ENCODE measurements at regions of chr4 and their contacts with region 1.

Region 1: GRCh38 chr4:81255524-81255923 is 40.5 kb upstream of the PRKG2 start:
- DNase-seq: peak; percentile 50
- H3K4me3 ChIP-seq: no peak overlapping the region
- H3K27me3 ChIP-seq: no peaks in the 10 kb centered on the region
- CTCF ChIP-seq: no peak

Region 2: GRCh38 chr4:81084029-81084428 is 171.5 kb before region 1 on chr4:
- CTCF ChIA-PET with region 1: interaction called, 11 read pairs
- POLR2A ChIA-PET with region 1: no interaction called
- DNase-seq: no peak
- H3K4me3 ChIP-seq: no peak overlapping the region
- H3K27me3 ChIP-seq: no peaks in the 10 kb centered on the region
- CTCF ChIP-seq: peak; percentile 52

Region 3: GRCh38 chr4:81523672-81524327 is 268.3 kb after region 1 on chr4:
- CTCF ChIA-PET with region 1: no interaction called
- POLR2A ChIA-PET with region 1: no interaction called
- DNase-seq: no peak
- H3K4me3 ChIP-seq: no peak overlapping the region
- H3K27me3 ChIP-seq: no peaks in the 10 kb centered on the region
- CTCF ChIP-seq: no peak